ENCODE measurements at regions of chr11 and their contacts with region 1.

Region 1: DNA sequence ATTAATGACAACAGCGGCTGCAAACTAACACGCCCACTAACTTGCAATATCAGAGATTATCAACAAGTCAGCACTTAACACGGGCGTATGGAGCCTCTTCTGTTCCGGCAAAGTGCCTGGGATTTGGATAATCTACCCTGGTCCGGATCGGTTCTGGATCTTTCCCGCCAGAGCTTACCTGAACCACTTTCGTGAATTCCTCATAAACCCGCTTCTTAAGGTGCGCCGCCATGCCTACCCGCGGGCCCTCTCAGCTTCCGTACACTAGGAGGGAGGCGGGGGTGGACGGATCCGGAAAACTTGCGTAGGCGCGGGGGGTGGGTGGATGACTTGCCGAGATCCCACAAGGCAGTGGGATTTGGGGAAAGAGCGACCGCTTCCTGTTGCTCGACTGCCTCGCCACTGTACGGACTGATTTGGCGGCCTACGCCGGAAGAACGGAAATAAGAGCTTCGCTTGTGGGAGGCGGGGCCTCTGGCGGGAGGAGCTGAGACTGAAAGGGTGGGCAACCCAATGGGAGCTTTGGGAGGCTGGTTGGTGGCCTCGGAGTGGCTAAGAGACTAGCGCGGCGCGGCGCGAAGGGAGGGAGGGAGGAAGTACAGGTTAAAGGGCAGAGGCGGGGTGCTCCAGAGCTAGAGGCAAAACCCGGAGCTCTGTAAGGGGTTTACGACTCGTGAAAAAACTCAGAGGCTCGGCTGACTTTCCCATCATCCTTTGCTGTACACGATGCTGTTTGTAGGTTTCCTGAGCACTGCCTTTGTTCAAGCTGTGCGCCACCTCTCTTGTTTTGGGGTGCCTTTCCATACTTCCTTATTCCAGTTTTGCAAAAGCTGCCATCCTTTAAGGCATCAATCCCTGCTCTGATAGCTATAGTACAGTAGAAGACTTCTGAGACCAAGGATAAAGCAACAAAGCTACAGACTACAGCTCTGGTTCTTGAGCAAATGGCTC is at the start of gene INTS4:
- DNase-seq: peak; percentile 92 to 99 (median 97)
- ATAC-seq: peak; percentile 97
- H3K4me3 ChIP-seq: peak within 1 kb of the TSS; percentile 79 to 81
- H3K4me3 Mint-ChIP-seq: peak within 1 kb of the TSS; percentile 96
- H3K27ac ChIP-seq: peak within 1 kb of the TSS; percentile 75 to 91
- H3K27ac Mint-ChIP-seq: peak within 1 kb of the TSS; percentile 99
- H3K4me1 ChIP-seq: peaks cover 22% of the 10 kb centered on the region
- H3K4me1 Mint-ChIP-seq: peaks cover 30% of the 10 kb centered on the region
- H3K27me3 ChIP-seq: no peaks in the 10 kb centered on the region
- H3K27me3 Mint-ChIP-seq: no peaks in the 10 kb centered on the region
- CTCF ChIP-seq: no peak
- total RNA-seq, gene INTS4: 39.4 to 49.0 TPM

Region 2: DNA sequence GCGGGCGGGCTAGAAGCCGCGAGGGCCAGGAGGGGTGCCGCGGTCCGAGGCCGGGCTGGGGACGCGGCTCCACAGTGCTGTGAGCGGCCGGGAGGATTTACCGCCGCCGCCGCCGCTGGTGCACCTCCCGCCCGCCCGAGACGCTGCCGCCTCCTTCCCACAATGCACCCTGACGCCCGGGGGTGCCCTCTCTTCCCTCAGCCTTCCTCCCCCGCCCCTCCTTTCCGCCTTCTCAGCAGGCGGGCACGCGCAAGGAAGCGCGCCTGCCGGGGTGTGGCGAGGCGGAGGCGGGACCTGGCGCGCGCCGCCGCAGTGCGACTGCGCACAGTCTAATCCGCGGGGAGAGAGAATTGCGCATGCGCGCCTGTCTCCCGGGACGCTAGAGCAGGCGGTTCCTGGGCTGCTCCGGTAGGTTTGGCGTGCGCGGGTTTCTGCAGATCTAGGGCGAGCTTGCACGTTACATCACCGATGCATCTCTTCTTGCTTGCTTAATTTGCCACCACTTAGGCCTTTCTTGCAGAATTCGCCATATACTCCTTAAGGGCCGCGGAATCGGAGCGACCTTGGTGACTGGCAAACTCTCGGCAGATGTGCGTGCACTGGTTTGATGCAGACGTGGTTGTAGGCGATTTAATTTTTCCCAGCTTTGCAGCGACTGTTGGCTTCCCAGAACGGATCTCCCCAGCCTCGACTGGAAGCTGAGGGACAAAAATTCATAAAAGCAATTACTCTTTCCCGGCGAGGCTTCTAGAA is 1613.5 kb before region 1 on chr11 and contains the starts of genes GVQW3 and THAP12:
- CTCF ChIA-PET with region 1: no interaction called
- POLR2A ChIA-PET with region 1: no interaction called
- intact Hi-C with region 1: loop called in 1 of 2 experiments (anchors 5 kb)
- DNase-seq: peak; percentile 93 to 99 (median 97)
- ATAC-seq: peak; percentile 89
- H3K4me3 ChIP-seq: peak within 1 kb of the TSS; percentile 62 to 64
- H3K4me3 Mint-ChIP-seq: peak within 1 kb of the TSS; percentile 94
- H3K27ac ChIP-seq: peak within 1 kb of the TSS; percentile 46 to 56
- H3K27ac Mint-ChIP-seq: peak within 1 kb of the TSS; percentile 90
- H3K4me1 ChIP-seq: peaks cover 34% of the 10 kb centered on the region
- H3K4me1 Mint-ChIP-seq: peaks cover 67% of the 10 kb centered on the region
- H3K27me3 ChIP-seq: no peaks in the 10 kb centered on the region
- H3K27me3 Mint-ChIP-seq: no peaks in the 10 kb centered on the region
- CTCF ChIP-seq: no peak
- total RNA-seq, gene GVQW3: 1.4 to 1.6 TPM
- total RNA-seq, gene THAP12: 44.7 to 47.2 TPM

Region 3: GRCh38 chr11:76835928-76836612 is 1158.6 kb before region 1 on chr11:
- CTCF ChIA-PET with region 1: no interaction called
- POLR2A ChIA-PET with region 1: no interaction called
- intact Hi-C with region 1: no loop called
- DNase-seq: no peak
- ATAC-seq: no peak
- H3K4me3 ChIP-seq: no peak overlapping the region
- H3K4me3 Mint-ChIP-seq: no peak overlapping the region
- H3K27ac ChIP-seq: no peak overlapping the region
- H3K27ac Mint-ChIP-seq: no peak overlapping the region
- H3K4me1 ChIP-seq: no peaks in the 10 kb centered on the region
- H3K4me1 Mint-ChIP-seq: no peaks in the 10 kb centered on the region
- H3K27me3 ChIP-seq: no peaks in the 10 kb centered on the region
- H3K27me3 Mint-ChIP-seq: peaks cover 6% of the 10 kb centered on the region
- CTCF ChIP-seq: no peak

Region 4: GRCh38 chr11:77047007-77047927 is 947.4 kb before region 1 on chr11:
- CTCF ChIA-PET with region 1: no interaction called
- POLR2A ChIA-PET with region 1: no interaction called
- intact Hi-C with region 1: loop called (anchors 2 to 10 kb)
- DNase-seq: peak; percentile 55 to 97 (median 80)
- ATAC-seq: peak; percentile 89
- H3K4me3 ChIP-seq: peak overlapping the region; percentile 41 to 58
- H3K4me3 Mint-ChIP-seq: peak overlapping the region; percentile 74
- H3K27ac ChIP-seq: peak overlapping the region; percentile 45 to 46
- H3K27ac Mint-ChIP-seq: peak overlapping the region; percentile 50
- H3K4me1 ChIP-seq: peaks cover 16% of the 10 kb centered on the region
- H3K4me1 Mint-ChIP-seq: peaks cover 15% of the 10 kb centered on the region
- H3K27me3 ChIP-seq: peaks cover 0 to 3% of the 10 kb centered on the region in 2 experiments
- H3K27me3 Mint-ChIP-seq: peaks cover 11% of the 10 kb centered on the region
- CTCF ChIP-seq: peak; percentile 75

Region 5: GRCh38 chr11:77806993-77807740 is 187.5 kb before region 1 on chr11:
- CTCF ChIA-PET with region 1: no interaction called
- POLR2A ChIA-PET with region 1: no interaction called
- intact Hi-C with region 1: no loop called
- DNase-seq: no peak
- ATAC-seq: no peak
- H3K4me3 ChIP-seq: no peak overlapping the region
- H3K4me3 Mint-ChIP-seq: no peak overlapping the region
- H3K27ac ChIP-seq: no peak overlapping the region
- H3K27ac Mint-ChIP-seq: peak overlapping the region; percentile 16
- H3K4me1 ChIP-seq: peaks cover 9% of the 10 kb centered on the region
- H3K4me1 Mint-ChIP-seq: peaks cover 67% of the 10 kb centered on the region
- H3K27me3 ChIP-seq: no peaks in the 10 kb centered on the region
- H3K27me3 Mint-ChIP-seq: no peaks in the 10 kb centered on the region
- CTCF ChIP-seq: no peak

Region 6: GRCh38 chr11:77820563-77821348 is 173.9 kb before region 1 on chr11 and contains the starts of genes AAMDC and RSF1:
- CTCF ChIA-PET with region 1: interaction called, 3 read pairs
- POLR2A ChIA-PET with region 1: interaction called, 23 read pairs
- intact Hi-C with region 1: loop called (anchors 1 kb)
- DNase-seq: peak; percentile 92 to 99 (median 97)
- ATAC-seq: peak; percentile 79
- H3K4me3 ChIP-seq: peak within 1 kb of the TSS; percentile 79 to 95
- H3K4me3 Mint-ChIP-seq: peak within 1 kb of the TSS; percentile 100
- H3K27ac ChIP-seq: peak within 1 kb of the TSS; percentile 83 to 91
- H3K27ac Mint-ChIP-seq: peak within 1 kb of the TSS; percentile 99
- H3K4me1 ChIP-seq: peaks cover 35% of the 10 kb centered on the region
- H3K4me1 Mint-ChIP-seq: peaks cover 38% of the 10 kb centered on the region
- H3K27me3 ChIP-seq: no peaks in the 10 kb centered on the region
- H3K27me3 Mint-ChIP-seq: no peaks in the 10 kb centered on the region
- CTCF ChIP-seq: peak; percentile 53
- total RNA-seq, gene AAMDC: 1.4 to 2.0 TPM
- total RNA-seq, gene RSF1: 96.7 to 103 TPM

Region 7: DNA sequence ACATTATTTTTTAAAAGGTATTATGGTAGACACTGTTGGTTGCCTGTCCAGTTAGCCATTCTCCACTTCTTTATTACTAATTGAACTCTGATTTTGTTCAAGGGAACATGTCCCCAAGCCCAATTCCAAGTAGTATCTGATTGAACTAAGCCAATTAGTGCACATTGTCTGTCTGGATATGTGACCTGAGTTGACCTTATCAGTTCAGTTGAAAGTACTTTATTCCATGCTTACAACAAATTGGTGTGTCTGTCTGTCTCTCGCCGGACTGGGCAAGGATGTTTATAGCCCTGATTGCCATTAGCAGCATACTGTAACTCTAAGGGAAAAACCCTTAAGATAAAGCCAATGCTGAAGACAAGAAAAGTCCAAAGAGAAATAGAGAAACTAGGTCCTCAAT is 85.9 kb before region 1 on chr11:
- CTCF ChIA-PET with region 1: no interaction called
- POLR2A ChIA-PET with region 1: no interaction called
- intact Hi-C with region 1: no loop called
- DNase-seq: no peak
- ATAC-seq: no peak
- H3K4me3 ChIP-seq: no peak overlapping the region
- H3K4me3 Mint-ChIP-seq: no peak overlapping the region
- H3K27ac ChIP-seq: no peak overlapping the region
- H3K27ac Mint-ChIP-seq: no peak overlapping the region
- H3K4me1 ChIP-seq: no peaks in the 10 kb centered on the region
- H3K4me1 Mint-ChIP-seq: no peaks in the 10 kb centered on the region
- H3K27me3 ChIP-seq: no peaks in the 10 kb centered on the region
- H3K27me3 Mint-ChIP-seq: no peaks in the 10 kb centered on the region
- CTCF ChIP-seq: no peak

Region 8: DNA sequence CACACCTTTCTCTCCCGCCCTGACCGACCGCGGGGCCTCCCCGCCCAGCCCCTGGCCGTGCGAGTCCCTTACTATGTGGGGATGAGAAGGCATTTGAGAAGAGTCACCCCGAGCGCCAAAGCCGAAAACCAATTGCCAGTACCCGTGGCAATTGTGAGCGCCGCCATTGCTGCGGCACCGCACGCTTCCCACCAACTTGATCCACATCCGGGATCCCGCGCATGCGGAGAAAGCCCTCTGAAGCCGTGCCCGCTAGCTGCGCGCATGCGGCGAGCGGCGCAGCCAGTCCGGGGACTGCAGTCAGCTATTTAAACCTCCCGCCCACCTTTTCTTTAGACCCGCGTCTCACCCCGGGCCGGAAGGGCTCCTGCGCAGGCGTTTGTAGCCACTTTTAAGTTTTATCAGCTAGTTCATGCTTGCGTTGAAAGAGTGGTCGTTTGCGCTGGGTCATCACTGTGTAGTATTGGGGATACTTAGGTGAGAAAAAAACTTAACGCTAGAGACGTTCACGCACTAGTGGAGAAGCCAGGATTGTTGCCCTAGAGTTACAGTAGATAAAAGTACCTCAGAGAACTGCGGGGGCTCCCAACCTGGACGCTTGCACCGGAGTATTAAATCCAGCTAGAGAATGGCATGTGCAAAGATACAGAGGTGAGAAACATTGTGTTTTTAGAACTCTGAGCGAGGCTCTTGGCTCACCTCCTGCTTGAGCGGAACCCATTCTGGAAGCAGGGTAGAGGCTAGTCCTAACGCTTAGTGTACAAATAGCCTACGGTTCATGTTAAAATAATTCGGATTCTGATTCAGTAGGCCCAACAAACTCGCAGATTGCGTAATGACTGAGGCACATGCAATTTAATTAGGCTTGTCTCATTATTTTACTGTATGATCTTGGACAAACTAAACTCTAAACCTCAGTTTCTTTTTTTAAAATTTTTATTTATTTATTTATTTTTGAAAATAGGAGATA is 145.0 kb after region 1 on chr11 and contains the start of gene ALG8:
- CTCF ChIA-PET with region 1: no interaction called
- POLR2A ChIA-PET with region 1: interaction called, 15 read pairs
- intact Hi-C with region 1: loop called (anchors 1 to 2 kb)
- DNase-seq: peak; percentile 96 to 99 (median 97)
- ATAC-seq: peak; percentile 95
- H3K4me3 ChIP-seq: peak within 1 kb of the TSS; percentile 92
- H3K4me3 Mint-ChIP-seq: peak within 1 kb of the TSS; percentile 95
- H3K27ac ChIP-seq: peak within 1 kb of the TSS; percentile 74 to 90
- H3K27ac Mint-ChIP-seq: peak within 1 kb of the TSS; percentile 97
- H3K4me1 ChIP-seq: peaks cover 19% of the 10 kb centered on the region
- H3K4me1 Mint-ChIP-seq: peaks cover 35% of the 10 kb centered on the region
- H3K27me3 ChIP-seq: no peaks in the 10 kb centered on the region
- H3K27me3 Mint-ChIP-seq: no peaks in the 10 kb centered on the region
- CTCF ChIP-seq: no peak
- total RNA-seq, gene ALG8: 14.2 to 17.5 TPM

Region 9: DNA sequence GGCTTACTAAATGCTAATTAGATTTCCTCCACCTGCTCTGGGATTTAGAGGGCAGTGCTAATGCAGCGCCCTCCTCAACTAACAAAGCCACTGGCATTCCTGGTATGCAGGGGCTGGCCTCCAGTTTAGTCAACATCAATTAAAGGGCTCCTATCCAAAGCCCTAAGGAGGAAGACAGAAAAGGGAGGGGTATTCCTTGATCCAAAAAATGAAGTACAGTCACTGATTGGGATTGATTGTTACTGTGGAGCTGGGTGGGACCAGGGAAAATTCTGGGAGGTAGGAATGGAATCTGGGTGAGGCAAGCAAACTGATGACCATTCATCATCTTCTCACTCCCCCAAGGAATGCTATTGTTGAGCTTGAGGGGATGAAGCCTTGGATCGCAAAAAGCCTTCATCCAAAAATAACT is 370.7 kb after region 1 on chr11:
- CTCF ChIA-PET with region 1: no interaction called
- POLR2A ChIA-PET with region 1: no interaction called
- intact Hi-C with region 1: no loop called
- DNase-seq: no peak
- ATAC-seq: no peak
- H3K4me3 ChIP-seq: no peak overlapping the region
- H3K4me3 Mint-ChIP-seq: no peak overlapping the region
- H3K27ac ChIP-seq: no peak overlapping the region
- H3K27ac Mint-ChIP-seq: no peak overlapping the region
- H3K4me1 ChIP-seq: no peaks in the 10 kb centered on the region
- H3K4me1 Mint-ChIP-seq: no peaks in the 10 kb centered on the region
- H3K27me3 ChIP-seq: no peaks in the 10 kb centered on the region
- H3K27me3 Mint-ChIP-seq: no peaks in the 10 kb centered on the region
- CTCF ChIP-seq: no peak

Region 10: GRCh38 chr11:78574386-78575381 is 580.0 kb after region 1 on chr11 and contains the start of gene NARS2:
- CTCF ChIA-PET with region 1: no interaction called
- POLR2A ChIA-PET with region 1: interaction called, 7 read pairs
- intact Hi-C with region 1: loop called (anchors 2 to 10 kb)
- DNase-seq: peak; percentile 94 to 99 (median 98)
- ATAC-seq: peak; percentile 98
- H3K4me3 ChIP-seq: peak within 1 kb of the TSS; percentile 73 to 95
- H3K4me3 Mint-ChIP-seq: peak within 1 kb of the TSS; percentile 94
- H3K27ac ChIP-seq: peak within 1 kb of the TSS; percentile 77 to 88
- H3K27ac Mint-ChIP-seq: peak within 1 kb of the TSS; percentile 99
- H3K4me1 ChIP-seq: peaks cover 16% of the 10 kb centered on the region
- H3K4me1 Mint-ChIP-seq: peaks cover 39% of the 10 kb centered on the region
- H3K27me3 ChIP-seq: no peaks in the 10 kb centered on the region
- H3K27me3 Mint-ChIP-seq: peaks cover 4% of the 10 kb centered on the region
- CTCF ChIP-seq: no peak
- total RNA-seq, gene NARS2: 6.3 to 8.3 TPM